ENCODE measurements at regions of chr10 and their contacts with region 1.

Region 1: DNA sequence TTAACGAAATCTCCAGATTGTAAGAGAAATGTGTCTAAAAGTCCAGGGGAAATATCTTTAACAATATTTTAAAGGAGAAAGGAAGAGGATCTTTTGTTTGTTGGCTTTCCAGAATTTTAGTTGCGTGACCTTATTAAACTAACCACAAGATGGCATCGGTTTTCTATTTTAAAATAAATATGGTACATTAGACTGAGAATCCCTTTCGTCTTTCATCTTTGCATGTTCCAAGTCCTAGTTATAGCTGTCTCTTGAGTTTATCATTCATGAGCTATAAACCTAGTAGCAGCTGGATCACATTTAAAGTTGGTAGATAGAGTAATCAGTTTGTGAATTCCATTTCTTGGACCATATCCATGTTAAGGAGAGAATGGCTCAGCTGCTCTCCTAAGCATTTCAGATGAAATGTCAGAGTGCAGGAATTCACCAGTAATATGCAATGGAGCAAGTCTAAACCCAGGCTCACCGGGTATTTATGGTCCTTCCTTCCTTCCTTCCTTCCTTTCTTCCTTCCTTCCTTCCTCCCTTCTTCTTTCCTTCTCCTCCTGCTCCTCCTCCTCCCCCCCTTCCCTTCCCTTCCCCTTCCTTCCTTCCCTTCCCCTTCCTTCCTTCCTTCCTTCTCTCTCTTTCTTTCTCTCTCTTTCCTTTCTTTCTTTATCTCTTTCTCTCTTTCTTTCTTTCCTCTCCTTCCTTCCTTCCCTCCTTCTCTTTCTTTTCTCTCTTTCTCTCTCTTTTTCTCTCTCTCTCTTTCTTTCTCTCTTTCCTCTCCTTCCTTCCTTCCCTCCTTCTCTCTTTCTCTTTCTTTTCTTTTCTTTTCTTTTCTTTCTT is 57.8 kb upstream of the RAB18 start:
- DNase-seq: no peak
- H3K4me3 Mint-ChIP-seq: no peak overlapping the region
- H3K27ac Mint-ChIP-seq: no peak overlapping the region
- H3K4me1 Mint-ChIP-seq: peaks cover 9% of the 10 kb centered on the region
- H3K27me3 Mint-ChIP-seq: no peaks in the 10 kb centered on the region

Region 2: DNA sequence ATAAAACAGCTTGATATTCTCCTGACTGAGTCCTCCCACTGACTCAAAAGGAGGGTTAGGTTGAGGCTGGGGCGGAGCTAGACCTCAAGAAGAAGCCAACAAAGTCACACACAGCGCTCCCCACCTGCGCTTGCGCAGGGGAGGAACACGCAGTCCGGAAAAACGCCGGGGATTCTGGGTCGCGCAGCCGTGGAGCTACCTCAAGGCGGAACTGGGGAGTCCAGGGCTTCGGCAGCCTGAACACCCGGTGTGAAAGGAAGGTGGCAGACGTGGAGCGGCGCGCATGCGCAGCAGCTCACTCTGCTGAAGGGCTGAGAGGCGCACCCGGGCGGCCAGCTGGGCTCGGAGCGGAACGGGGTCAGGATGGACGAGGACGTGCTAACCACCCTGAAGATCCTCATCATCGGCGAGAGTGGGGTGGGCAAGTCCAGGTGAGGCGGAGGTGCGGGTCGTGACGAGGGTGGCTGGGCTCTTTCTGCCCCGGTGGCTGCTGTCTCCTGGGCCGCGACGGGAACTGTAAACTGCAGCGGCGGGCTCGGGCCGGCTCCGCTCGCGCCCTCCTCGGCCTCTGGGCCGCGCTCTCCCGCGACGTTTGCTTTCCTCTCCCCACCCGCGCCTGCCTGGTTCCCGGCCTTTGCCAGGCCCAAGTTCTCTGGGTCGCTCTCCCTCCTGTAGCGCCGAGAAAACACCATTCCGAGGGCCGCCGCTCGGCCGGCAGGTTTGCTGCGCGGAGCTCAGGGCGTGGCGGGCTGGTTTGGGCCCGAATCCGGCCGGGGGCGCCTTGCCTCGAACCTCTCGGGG is 57.9 kb after region 1 on chr10 and contains the start of gene RAB18:
- CTCF ChIA-PET with region 1: interaction called, 5 read pairs
- POLR2A ChIA-PET with region 1: no interaction called
- intact Hi-C with region 1: loop called (anchors 5 kb)
- DNase-seq: peak; percentile 99
- H3K4me3 Mint-ChIP-seq: peak within 1 kb of the TSS; percentile 100
- H3K27ac Mint-ChIP-seq: peak within 1 kb of the TSS; percentile 96
- H3K4me1 Mint-ChIP-seq: peaks cover 51% of the 10 kb centered on the region
- H3K27me3 Mint-ChIP-seq: no peaks in the 10 kb centered on the region
- total RNA-seq, gene RAB18: 51.7 to 54.0 TPM

Region 3: DNA sequence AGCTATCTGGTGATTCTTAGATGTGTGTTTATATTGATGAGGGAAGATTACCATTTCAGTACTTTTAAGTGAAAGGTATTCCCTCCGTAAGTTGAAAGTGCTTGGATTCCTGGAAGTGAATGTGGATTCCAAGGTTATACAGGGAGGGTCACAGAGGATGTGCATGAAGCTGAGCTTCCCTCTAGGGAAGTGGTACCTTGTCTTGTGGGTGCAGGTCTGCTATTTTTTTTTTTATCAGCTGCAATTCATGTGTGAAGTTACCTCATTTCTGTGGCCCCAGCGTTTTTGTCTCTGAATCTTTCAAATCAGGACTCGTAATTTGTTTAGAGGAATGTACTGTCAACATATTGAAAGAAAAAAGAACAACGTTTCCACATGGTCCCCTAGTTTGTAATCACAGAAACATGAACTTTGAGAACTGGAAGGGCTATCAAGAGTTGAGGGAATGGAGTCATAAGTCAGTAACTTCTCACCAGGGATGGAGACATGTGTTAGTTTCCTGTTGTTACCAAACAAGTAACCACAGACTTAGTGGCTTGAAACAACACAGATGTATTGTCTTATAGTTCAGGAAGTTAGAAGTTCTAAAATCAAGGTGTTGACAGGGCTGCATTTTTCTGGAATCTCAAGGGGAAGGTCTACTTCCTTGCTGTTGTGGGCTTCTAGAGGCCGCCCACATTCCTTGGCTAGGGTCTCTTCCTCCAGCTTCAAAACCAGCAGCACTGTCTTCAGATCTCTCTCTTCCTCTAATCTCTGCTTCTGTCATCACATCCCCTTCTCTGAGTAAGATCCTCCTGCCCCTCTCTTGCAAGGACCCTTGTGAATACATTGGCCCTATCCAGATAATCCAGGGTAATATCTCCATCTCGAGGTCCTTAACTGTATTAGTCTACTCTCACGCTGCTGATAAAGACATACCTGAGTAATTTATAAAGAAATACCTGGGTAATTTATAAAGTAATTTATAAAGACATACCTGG is 122.2 kb after region 1 on chr10:
- CTCF ChIA-PET with region 1: no interaction called
- POLR2A ChIA-PET with region 1: no interaction called
- intact Hi-C with region 1: loop called (anchors 5 kb)
- DNase-seq: no peak
- H3K4me3 Mint-ChIP-seq: no peak overlapping the region
- H3K27ac Mint-ChIP-seq: peak overlapping the region; percentile 53
- H3K4me1 Mint-ChIP-seq: peaks cover 28% of the 10 kb centered on the region
- H3K27me3 Mint-ChIP-seq: no peaks in the 10 kb centered on the region

Region 4: GRCh38 chr10:27655296-27655695 is 209.0 kb after region 1 on chr10:
- CTCF ChIA-PET with region 1: interaction called, 15 read pairs
- POLR2A ChIA-PET with region 1: no interaction called
- intact Hi-C with region 1: loop called (anchors 1 kb)
- DNase-seq: no peak
- H3K4me3 Mint-ChIP-seq: no peak overlapping the region
- H3K27ac Mint-ChIP-seq: no peak overlapping the region
- H3K4me1 Mint-ChIP-seq: no peaks in the 10 kb centered on the region
- H3K27me3 Mint-ChIP-seq: peaks cover 11% of the 10 kb centered on the region

Region 5: DNA sequence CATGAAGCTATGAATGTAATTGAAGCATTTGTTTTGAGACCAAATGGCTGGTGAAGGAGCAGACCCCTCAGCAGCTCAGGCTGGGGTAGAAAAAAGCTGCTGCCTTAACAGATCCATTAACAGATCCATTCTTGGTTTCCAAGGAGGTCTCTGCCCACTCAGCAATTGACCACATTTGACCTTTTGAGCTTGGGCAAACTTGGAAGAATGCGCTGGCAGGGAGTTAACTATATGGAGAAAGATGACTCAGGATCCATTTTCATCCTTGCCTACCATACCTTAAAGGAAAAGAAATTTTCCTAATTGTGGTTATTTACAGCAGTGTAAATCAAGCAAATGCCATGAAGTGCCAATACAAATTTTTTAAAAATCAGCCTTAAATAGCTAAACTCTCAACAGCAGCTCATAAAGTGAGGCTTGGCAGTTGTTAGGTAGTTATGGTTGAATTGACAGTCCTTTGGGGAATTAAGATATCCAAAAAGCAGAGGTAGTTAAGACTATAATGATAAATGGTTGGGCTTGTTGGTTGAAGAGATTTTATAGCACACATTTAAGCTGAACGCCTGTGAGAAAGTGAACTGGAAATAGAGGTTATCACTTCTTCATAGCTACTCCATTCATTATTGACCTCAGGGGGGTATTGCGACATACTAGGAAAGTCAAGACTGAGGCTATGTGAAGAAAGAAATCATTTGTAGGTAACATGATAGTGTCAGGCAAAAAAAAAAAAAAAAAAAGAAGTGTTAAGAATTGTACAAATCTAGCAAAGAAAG is 215.4 kb after region 1 on chr10:
- CTCF ChIA-PET with region 1: interaction called, 11 read pairs
- POLR2A ChIA-PET with region 1: no interaction called
- intact Hi-C with region 1: loop called (anchors 1 kb)
- DNase-seq: no peak
- H3K4me3 Mint-ChIP-seq: no peak overlapping the region
- H3K27ac Mint-ChIP-seq: no peak overlapping the region
- H3K4me1 Mint-ChIP-seq: no peaks in the 10 kb centered on the region
- H3K27me3 Mint-ChIP-seq: peaks cover 32% of the 10 kb centered on the region

Region 6: GRCh38 chr10:28241741-28242399 is 795.6 kb after region 1 on chr10:
- CTCF ChIA-PET with region 1: interaction called, 9 read pairs
- POLR2A ChIA-PET with region 1: no interaction called
- intact Hi-C with region 1: loop called (anchors 5 kb)
- DNase-seq: peak; percentile 37
- H3K4me3 Mint-ChIP-seq: no peak overlapping the region
- H3K27ac Mint-ChIP-seq: no peak overlapping the region
- H3K4me1 Mint-ChIP-seq: peaks cover 20% of the 10 kb centered on the region
- H3K27me3 Mint-ChIP-seq: no peaks in the 10 kb centered on the region

Region 7: DNA sequence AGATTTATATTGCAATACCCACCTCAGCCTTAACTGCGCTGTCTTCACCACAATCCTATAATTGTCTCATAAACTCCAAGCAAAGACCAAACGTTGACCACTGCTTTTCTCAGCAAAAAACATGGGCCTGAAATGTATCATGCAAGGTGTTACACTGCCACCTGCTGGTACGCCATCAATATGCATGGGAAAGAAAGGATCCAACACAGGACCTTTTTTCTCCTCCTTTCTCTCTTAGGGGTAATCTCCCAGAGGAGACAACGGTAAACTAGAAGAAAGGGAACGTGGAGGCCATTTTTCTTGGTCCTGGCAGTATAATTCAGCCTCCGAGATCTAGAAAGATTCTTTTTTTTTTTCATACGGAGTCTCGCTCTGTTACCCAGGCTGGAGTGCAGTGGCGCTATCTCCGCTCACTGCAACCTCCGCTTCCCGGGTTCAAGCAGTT is 935.6 kb after region 1 on chr10:
- CTCF ChIA-PET with region 1: no interaction called
- POLR2A ChIA-PET with region 1: no interaction called
- intact Hi-C with region 1: loop called (anchors 10 kb)
- DNase-seq: peak; percentile 89
- H3K4me3 Mint-ChIP-seq: no peak overlapping the region
- H3K27ac Mint-ChIP-seq: no peak overlapping the region
- H3K4me1 Mint-ChIP-seq: peaks cover 28% of the 10 kb centered on the region
- H3K27me3 Mint-ChIP-seq: no peaks in the 10 kb centered on the region

Measured in activated CD4-positive, alpha-beta memory T cell treated with anti-CD3 and anti-CD28 coated beads for 36 hours (primary cell).